Adrenal gland (tissue), 19 donors: ENCODE measurements at regions of chr21 and their contacts with region 1.

Region 1: DNA sequence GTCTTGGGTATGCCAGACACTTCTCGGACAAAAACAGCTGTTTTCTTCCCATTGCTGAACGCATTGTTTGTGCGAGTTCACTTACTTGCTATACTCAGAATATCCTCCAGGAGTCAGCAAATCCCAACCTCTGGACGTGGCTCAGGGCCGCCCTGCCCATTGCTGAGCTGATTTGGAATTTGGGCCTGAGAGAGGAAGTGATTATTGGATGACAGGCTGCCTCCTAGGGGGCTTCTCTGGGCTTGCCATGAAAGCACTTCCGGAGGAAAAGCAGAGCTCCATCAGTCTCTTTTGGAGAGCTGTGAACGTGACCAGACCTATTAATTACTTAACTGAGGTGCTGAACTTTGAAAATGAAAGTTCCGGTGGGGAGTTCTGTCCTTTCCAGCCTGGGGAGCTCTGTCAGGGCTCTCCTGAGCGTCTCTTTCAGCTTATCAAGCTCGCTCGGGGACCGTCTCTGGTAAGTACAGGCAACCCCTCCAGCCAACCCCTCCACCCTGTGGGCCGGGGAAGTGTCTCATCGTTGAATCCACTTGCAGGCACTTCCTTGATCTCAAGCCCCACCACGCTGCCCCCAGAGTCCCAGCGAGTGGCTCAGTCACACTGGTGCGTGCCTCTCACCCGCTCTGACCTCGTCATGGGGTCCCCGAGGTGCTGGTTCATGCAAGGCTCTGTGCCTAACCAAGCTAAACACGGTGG is 76.9 kb downstream of the CLIC6 start:
- DNase-seq: peak; percentile 56 to 83 (median 71)
- H3K4me3 ChIP-seq: peak overlapping the region in 1 of 4 donors; percentile 2
- H3K27ac ChIP-seq: no peak overlapping the region
- H3K4me1 ChIP-seq: peaks cover 5 to 8% of the 10 kb centered on the region in 2 donors
- H3K27me3 ChIP-seq: no peaks in the 10 kb centered on the region
- CTCF ChIP-seq: peak; percentile 79 to 92 (median 89)
- POLR2A ChIP-seq: no peak

Region 2: DNA sequence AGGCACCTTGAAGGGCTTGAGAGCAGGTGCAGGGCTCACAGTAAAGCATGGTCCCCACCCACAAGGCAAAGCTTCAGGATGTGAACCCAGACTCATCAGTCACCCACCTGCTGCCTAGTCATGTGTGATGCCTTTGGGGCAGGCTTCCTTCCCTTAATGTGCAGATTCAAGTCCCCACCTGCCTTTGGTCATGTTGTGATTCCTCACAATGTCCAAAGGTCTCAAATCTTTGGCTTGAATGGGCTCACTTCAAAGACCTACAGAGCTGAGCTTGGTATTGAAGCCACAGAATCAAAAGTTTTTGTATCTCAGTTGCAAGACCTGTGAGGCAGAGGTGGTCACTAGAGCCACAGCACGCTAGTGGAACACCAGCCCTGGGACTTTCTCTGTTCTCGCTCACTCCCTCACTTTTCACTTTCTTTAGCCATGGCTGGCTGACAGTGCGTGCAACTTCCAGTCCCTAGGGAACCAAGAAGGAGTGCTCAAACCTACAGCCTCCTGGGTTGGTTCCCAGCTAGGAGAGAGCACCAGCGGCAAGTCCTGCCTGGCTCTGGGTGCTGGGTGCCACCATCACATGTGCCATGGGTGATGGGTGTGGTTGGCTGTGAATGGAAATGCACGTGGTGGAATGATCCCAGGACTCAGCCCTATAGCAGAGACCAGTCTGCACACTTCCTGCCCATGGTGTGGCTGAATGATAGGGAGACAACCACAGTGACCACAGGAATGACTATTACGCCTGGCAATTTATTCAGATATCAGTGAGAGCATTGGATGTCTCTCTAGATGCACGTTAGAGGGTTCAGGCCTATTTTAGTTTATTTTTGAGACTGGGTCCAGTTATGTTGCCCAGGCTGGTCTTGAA is 103.3 kb before region 1 on chr21:
- intact Hi-C with region 1: no loop called
- DNase-seq: no peak
- H3K4me3 ChIP-seq: no peak overlapping the region
- H3K27ac ChIP-seq: no peak overlapping the region
- H3K4me1 ChIP-seq: no peaks in the 10 kb centered on the region
- H3K27me3 ChIP-seq: no peaks in the 10 kb centered on the region
- CTCF ChIP-seq: no peak
- POLR2A ChIP-seq: no peak

Region 3: DNA sequence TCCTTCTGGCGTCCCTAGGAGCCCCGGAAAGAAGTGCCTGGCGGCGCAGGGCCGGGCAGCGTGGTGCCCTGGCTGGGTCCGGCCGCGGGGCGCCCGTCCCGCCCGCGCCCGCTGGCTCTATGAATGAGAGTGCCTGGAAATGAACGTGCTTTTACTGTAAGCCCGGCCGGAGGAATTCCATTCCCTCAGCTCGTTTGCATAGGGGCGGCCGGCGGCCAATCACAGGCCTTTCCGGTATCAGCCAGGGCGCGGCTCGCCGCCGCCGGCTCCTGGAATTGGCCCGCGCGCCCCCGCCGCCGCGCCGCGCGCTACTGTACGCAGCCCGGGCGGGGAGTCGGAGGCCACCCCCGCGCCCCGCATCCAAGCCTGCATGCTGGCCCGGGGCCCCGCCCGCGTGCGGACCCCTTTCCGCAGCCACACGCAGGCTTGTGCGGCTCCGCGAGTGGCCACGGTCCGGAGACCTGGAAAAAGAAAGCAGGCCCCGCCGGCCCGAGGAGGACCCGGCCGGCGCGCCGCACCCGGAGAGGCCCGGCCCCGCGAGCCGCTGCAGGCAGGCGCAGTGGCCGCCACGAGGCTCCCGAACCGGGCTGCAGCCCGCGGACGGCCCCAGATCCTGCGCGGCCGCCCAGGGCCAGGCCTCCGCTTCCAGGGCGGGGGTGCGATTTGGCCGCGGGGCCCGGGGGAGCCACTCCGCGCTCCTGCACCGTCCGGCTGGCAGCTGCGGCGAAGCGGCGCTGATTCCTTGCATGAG is 143.0 kb after region 1 on chr21:
- intact Hi-C with region 1: loop called (anchors 5 to 10 kb)
- DNase-seq: peak; percentile 92 to 97 (median 96)
- H3K4me3 ChIP-seq: peak overlapping the region; percentile 38 to 83 (median 52)
- H3K27ac ChIP-seq: peak overlapping the region; percentile 81 to 93 (median 93)
- H3K4me1 ChIP-seq: peaks cover 0 to 13% of the 10 kb centered on the region in 2 donors
- H3K27me3 ChIP-seq: peaks cover 30% of the 10 kb centered on the region
- CTCF ChIP-seq: no peak
- POLR2A ChIP-seq: peak; percentile 96 to 99

Region 4: GRCh38 chr21:35051287-35051818 is 305.6 kb after region 1 on chr21:
- intact Hi-C with region 1: loop called in 1 of 2 experiments (anchors 10 kb)
- DNase-seq: peak; percentile 61 to 89 (median 83)
- H3K4me3 ChIP-seq: no peak overlapping the region
- H3K27ac ChIP-seq: peak overlapping the region in 2 of 5 donors; percentile 35 to 53
- H3K4me1 ChIP-seq: peaks cover 0 to 5% of the 10 kb centered on the region in 2 donors
- H3K27me3 ChIP-seq: no peaks in the 10 kb centered on the region
- CTCF ChIP-seq: peak in 5 of 6 experiments; percentile 27 to 55 (median 53)
- POLR2A ChIP-seq: no peak

Region 5: GRCh38 chr21:35400233-35400957 is 654.7 kb after region 1 on chr21:
- intact Hi-C with region 1: loop called in 1 of 2 experiments (anchors 5 kb)
- DNase-seq: peak in 5 of 7 donors; percentile 16 to 29 (median 23)
- H3K4me3 ChIP-seq: no peak overlapping the region
- H3K27ac ChIP-seq: no peak overlapping the region
- H3K4me1 ChIP-seq: no peaks in the 10 kb centered on the region
- H3K27me3 ChIP-seq: peaks cover 4% of the 10 kb centered on the region
- CTCF ChIP-seq: peak; percentile 16 to 63 (median 58)
- POLR2A ChIP-seq: no peak

Region 6: GRCh38 chr21:35840197-35840799 is 1094.6 kb after region 1 on chr21:
- intact Hi-C with region 1: loop called in 1 of 2 experiments (anchors 5 kb)
- DNase-seq: peak; percentile 56 to 85 (median 71)
- H3K4me3 ChIP-seq: no peak overlapping the region
- H3K27ac ChIP-seq: no peak overlapping the region
- H3K4me1 ChIP-seq: no peaks in the 10 kb centered on the region
- H3K27me3 ChIP-seq: no peaks in the 10 kb centered on the region
- CTCF ChIP-seq: peak; percentile 52 to 92 (median 82)
- POLR2A ChIP-seq: no peak

Region 7: GRCh38 chr21:36028127-36029069 is 1282.7 kb after region 1 on chr21:
- intact Hi-C with region 1: loop called in 1 of 2 experiments (anchors 5 kb)
- DNase-seq: peak; percentile 70 to 92 (median 81)
- H3K4me3 ChIP-seq: no peak overlapping the region
- H3K27ac ChIP-seq: no peak overlapping the region
- H3K4me1 ChIP-seq: peaks cover 2% of the 10 kb centered on the region in 2 donors
- H3K27me3 ChIP-seq: no peaks in the 10 kb centered on the region
- CTCF ChIP-seq: peak; percentile 84 to 93 (median 90)
- POLR2A ChIP-seq: no peak